ENCODE measurements at regions of chr15 and their contacts with region 1.

Region 1: DNA sequence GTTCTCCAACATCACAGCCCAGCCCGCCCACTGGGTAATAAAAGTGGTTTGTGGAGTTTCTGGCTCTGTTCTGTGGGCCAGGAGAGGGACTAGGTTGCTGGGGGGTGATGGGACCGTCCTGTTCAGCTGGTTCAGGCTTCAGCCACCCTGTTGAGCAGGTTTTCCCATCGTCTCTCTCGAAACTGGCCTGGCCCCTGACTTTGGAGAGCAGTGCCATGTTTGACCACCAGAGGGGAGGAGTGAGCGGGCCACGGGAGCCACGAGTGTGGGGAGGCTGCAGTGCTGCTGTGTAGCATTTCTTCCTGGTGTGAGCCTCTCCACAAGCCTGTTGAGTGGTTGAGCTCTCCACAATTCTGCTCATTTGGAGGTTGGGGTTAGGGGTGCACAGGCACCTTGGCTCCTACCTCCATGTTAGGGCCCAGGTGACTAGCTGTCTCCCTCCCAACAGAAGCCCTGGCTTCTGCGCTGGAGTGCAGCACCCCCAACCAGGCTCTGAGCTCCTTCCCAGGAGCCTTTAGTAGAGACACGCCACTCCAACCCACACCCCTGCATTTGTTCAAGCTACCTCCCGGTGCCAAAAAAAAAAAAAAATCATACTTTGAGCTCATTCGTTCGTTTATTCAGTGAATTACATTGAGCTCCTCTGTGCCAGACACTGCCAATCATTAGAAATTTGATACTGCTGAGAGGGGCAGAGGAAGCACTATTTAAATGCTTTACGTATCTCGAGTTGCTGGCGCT is 13.9 kb downstream of the SPINT1 start:
- DNase-seq: peak; percentile 88
- ATAC-seq: peak; percentile 79
- H3K4me3 Mint-ChIP-seq: no peak overlapping the region
- H3K27ac Mint-ChIP-seq: peak overlapping the region; percentile 94
- H3K4me1 Mint-ChIP-seq: peaks cover 22% of the 10 kb centered on the region
- H3K27me3 Mint-ChIP-seq: no peaks in the 10 kb centered on the region
- CTCF ChIP-seq: peak; percentile 93

Region 2: GRCh38 chr15:40743921-40744814 is 113.6 kb before region 1 on chr15:
- CTCF ChIA-PET with region 1: interaction called, 23 read pairs
- POLR2A ChIA-PET with region 1: interaction called, 6 read pairs
- DNase-seq: no peak
- ATAC-seq: peak; percentile 56
- H3K4me3 Mint-ChIP-seq: no peak overlapping the region
- H3K27ac Mint-ChIP-seq: no peak overlapping the region
- H3K4me1 Mint-ChIP-seq: peaks cover 19% of the 10 kb centered on the region
- H3K27me3 Mint-ChIP-seq: no peaks in the 10 kb centered on the region
- CTCF ChIP-seq: no peak

Region 3: GRCh38 chr15:40782580-40783227 is 75.1 kb before region 1 on chr15:
- CTCF ChIA-PET with region 1: interaction called, 65 read pairs
- POLR2A ChIA-PET with region 1: interaction called, 5 read pairs
- DNase-seq: peak; percentile 75
- ATAC-seq: peak; percentile 74
- H3K4me3 Mint-ChIP-seq: no peak overlapping the region
- H3K27ac Mint-ChIP-seq: peak overlapping the region; percentile 54
- H3K4me1 Mint-ChIP-seq: peaks cover 37% of the 10 kb centered on the region
- H3K27me3 Mint-ChIP-seq: no peaks in the 10 kb centered on the region
- CTCF ChIP-seq: no peak

Region 4: DNA sequence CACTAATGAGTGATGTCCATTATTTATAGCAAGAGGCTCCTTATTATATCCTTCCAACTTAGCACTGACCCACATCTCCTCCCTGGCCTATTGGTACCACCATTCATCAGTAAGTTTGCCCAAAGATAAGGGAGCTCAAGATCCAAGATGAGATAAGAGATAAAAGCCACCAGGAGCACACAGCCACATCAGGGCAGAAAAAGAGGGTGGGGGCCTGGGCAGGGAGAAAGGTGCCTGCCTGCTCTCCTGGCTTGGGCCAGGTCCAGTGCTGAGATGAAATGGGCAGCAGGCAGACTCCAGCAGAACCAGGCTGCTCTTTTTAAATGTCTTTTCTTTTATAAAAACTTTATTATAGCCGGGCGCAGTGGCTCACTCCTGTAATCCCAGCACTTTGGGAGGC is 24.8 kb before region 1 on chr15:
- CTCF ChIA-PET with region 1: interaction called, 19 read pairs
- POLR2A ChIA-PET with region 1: interaction called, 4 read pairs
- DNase-seq: no peak
- ATAC-seq: peak; percentile 16; the same call in 1 of the 2 replicates
- H3K4me3 Mint-ChIP-seq: no peak overlapping the region
- H3K27ac Mint-ChIP-seq: no peak overlapping the region; the same call in 1 of the 2 replicates
- H3K4me1 Mint-ChIP-seq: peaks cover 12% of the 10 kb centered on the region
- H3K27me3 Mint-ChIP-seq: no peaks in the 10 kb centered on the region
- CTCF ChIP-seq: no peak

Region 5: GRCh38 chr15:40847205-40847961 is 10.4 kb before region 1 on chr15:
- CTCF ChIA-PET with region 1: interaction called, 177 read pairs
- POLR2A ChIA-PET with region 1: interaction called, 13 read pairs
- DNase-seq: no peak
- ATAC-seq: peak; percentile 27
- H3K4me3 Mint-ChIP-seq: peak overlapping the region; percentile 93
- H3K27ac Mint-ChIP-seq: peak overlapping the region; percentile 57
- H3K4me1 Mint-ChIP-seq: peaks cover 41% of the 10 kb centered on the region
- H3K27me3 Mint-ChIP-seq: no peaks in the 10 kb centered on the region
- CTCF ChIP-seq: no peak

Region 6: GRCh38 chr15:40886586-40886985 is 28.8 kb after region 1 on chr15:
- CTCF ChIA-PET with region 1: interaction called, 237 read pairs
- POLR2A ChIA-PET with region 1: interaction called, 4 read pairs
- DNase-seq: no peak
- ATAC-seq: no peak
- H3K4me3 Mint-ChIP-seq: no peak overlapping the region
- H3K27ac Mint-ChIP-seq: no peak overlapping the region; the same call in 1 of the 2 replicates
- H3K4me1 Mint-ChIP-seq: no peaks in the 10 kb centered on the region
- H3K27me3 Mint-ChIP-seq: no peaks in the 10 kb centered on the region
- CTCF ChIP-seq: no peak

Region 7: GRCh38 chr15:40914486-40914885 is 56.7 kb after region 1 on chr15:
- CTCF ChIA-PET with region 1: interaction called, 10 read pairs
- POLR2A ChIA-PET with region 1: no interaction called
- DNase-seq: no peak
- ATAC-seq: peak; percentile 31
- H3K4me3 Mint-ChIP-seq: no peak overlapping the region
- H3K27ac Mint-ChIP-seq: 0 out of 2 replicates have a peak overlapping the region, but pooled peaks have one; percentile 1
- H3K4me1 Mint-ChIP-seq: peaks cover 22% of the 10 kb centered on the region
- H3K27me3 Mint-ChIP-seq: 0 out of 2 replicates have a peak, but pooled peaks cover 2% of the 10 kb centered on the region
- CTCF ChIP-seq: no peak

Region 8: GRCh38 chr15:41139619-41140018 is 281.8 kb after region 1 on chr15:
- CTCF ChIA-PET with region 1: no interaction called
- POLR2A ChIA-PET with region 1: no interaction called
- DNase-seq: no peak
- ATAC-seq: no peak
- H3K4me3 Mint-ChIP-seq: no peak overlapping the region
- H3K27ac Mint-ChIP-seq: no peak overlapping the region
- H3K4me1 Mint-ChIP-seq: no peaks in the 10 kb centered on the region
- H3K27me3 Mint-ChIP-seq: no peaks in the 10 kb centered on the region
- CTCF ChIP-seq: no peak

Measured in WTC11 (cell line).